Left cardiac atrium (tissue), 4 donors: ENCODE measurements at regions of chr17 and their contacts with region 1.

Region 1: GRCh38 chr17:75393523-75394331 is 11.8 kb downstream of the GRB2 start:
- DNase-seq: peak; percentile 99
- ATAC-seq: peak; percentile 99 to 100

Region 2: GRCh38 chr17:75356260-75356937 is 37.3 kb before region 1 on chr17:
- intact Hi-C with region 1: loop called in 1 of 2 experiments (anchors 5 kb)
- DNase-seq: no peak
- ATAC-seq: no peak